ENCODE measurements at regions of chr20 and their contacts with region 1.

Region 1: GRCh38 chr20:34089655-34090345 is 22.2 kb downstream of the EIF2S2 start:
- DNase-seq: no peak
- ATAC-seq: no peak
- H3K4me3 ChIP-seq: no peak overlapping the region
- H3K27ac ChIP-seq: no peak overlapping the region
- H3K4me1 ChIP-seq: peaks cover 14 to 19% of the 10 kb centered on the region in 2 experiments; a peak in 4 of 5 replicates
- H3K27me3 ChIP-seq: no peaks in the 10 kb centered on the region
- CTCF ChIP-seq: no peak
- EP300 ChIP-seq: no peak
- POLR2A ChIP-seq: no peak; the same call in 1 of the 2 replicates
- RAD21 ChIP-seq: no peak

Region 2: GRCh38 chr20:34102342-34102741 is 12.5 kb after region 1 on chr20:
- CTCF ChIA-PET with region 1: no interaction called
- POLR2A ChIA-PET with region 1: interaction called, 24 read pairs
- in situ Hi-C with region 1: no loop called
- intact Hi-C with region 1: no loop called
- DNase-seq: no peak
- ATAC-seq: no peak
- H3K4me3 ChIP-seq: no peak overlapping the region
- H3K27ac ChIP-seq: no peak overlapping the region
- H3K4me1 ChIP-seq: no peaks in the 10 kb centered on the region
- H3K27me3 ChIP-seq: no peaks in the 10 kb centered on the region
- CTCF ChIP-seq: no peak
- EP300 ChIP-seq: no peak
- POLR2A ChIP-seq: no peak
- RAD21 ChIP-seq: no peak